ENCODE measurements at regions of chr6 and their contacts with region 1.

Region 1: DNA sequence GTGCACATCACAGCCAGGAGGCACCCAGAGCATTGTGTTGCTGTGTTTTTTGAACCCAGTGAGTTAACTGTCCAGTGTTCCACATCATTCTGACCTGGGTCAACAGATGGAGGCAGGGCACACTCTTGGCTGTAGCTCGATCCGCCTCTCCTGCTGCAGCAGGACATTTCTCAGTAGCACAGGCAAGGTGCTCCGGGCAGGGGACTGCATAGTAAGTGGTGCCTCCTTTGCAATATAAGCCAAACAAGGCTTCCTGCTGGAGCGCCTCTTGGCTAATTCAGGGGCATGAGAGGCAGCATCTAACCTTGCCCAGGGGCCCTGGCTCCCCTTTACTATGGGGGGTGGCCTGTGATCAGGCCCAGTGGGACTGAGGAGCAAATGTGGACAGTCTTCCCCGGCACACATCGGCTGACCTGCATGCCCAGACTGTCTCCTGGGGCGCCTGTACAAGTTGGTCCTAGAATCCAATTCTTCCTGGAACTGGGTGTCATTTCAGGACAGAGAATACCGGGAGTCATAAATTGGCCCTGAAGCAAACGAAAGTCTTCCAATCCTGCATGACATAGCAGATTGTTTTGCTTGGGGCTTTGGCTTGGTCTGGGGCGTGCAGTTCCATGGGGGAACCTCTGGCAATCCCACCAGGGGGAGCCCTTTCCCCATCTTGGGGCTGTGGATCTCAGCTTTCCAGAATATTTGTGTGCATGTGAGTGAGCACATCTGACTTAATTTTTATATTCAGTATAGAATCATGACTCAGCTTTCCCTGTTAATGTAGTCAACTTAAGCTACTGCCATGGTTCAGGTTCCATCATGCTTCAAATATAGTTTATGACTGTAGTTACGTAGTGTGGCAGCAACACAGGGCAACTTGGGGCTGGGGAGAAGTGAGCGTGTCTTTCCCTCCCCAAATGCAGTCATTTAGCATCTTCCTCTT is 56.0 kb upstream of the DDR1 start:
- DNase-seq: peak; percentile 85 to 95
- H3K4me3 ChIP-seq: no peak overlapping the region
- H3K27ac ChIP-seq: peak overlapping the region; percentile 82
- H3K4me1 ChIP-seq: peaks cover 34% of the 10 kb centered on the region
- H3K27me3 ChIP-seq: no peaks in the 10 kb centered on the region
- CTCF ChIP-seq: peak; percentile 93

Region 2: DNA sequence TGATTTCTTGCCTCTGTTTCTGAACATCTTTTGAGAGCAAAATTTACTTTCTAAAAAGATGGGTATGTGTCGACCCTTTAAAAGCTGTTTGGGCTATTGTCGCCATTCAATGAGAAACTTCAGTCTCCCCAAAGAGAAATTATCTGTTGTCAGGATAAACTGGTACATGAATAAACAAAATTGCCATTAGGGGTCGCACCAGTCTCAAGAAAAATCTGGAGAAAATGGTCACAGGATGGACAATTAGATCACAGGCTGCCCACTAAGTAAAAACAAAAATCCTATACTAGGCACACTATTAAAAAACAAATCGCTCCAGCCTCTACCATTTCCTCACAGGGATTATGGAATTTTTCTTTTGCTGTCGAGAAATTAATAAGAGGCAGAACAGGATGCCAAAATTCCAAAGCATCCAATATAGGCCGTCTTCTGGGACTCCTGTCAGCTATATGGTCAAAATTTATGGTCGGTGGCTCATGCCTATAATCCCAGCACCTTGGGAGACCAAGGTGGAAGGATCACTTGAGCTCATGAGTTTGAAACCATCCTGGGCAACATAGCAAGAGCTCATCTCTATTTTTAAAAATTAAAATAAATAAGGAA is 344.5 kb before region 1 on chr6:
- CTCF ChIA-PET with region 1: no interaction called
- POLR2A ChIA-PET with region 1: no interaction called
- intact Hi-C with region 1: loop called (anchors 5 kb)
- DNase-seq: peak; percentile 45 to 56
- H3K4me3 ChIP-seq: no peak overlapping the region
- H3K27ac ChIP-seq: no peak overlapping the region
- H3K4me1 ChIP-seq: no peaks in the 10 kb centered on the region; the same call in 1 of the 2 replicates
- H3K27me3 ChIP-seq: peaks cover 30% of the 10 kb centered on the region
- CTCF ChIP-seq: peak; percentile 74

Region 3: GRCh38 chr6:30742316-30743098 is 85.8 kb before region 1 on chr6 and contains the start of gene FLOT1:
- CTCF ChIA-PET with region 1: no interaction called
- POLR2A ChIA-PET with region 1: interaction called, 6 read pairs
- intact Hi-C with region 1: loop called (anchors 1 kb)
- DNase-seq: peak; percentile 94 to 100
- H3K4me3 ChIP-seq: peak within 1 kb of the TSS; percentile 86
- H3K27ac ChIP-seq: peak within 1 kb of the TSS; percentile 93
- H3K4me1 ChIP-seq: peaks cover 59% of the 10 kb centered on the region
- H3K27me3 ChIP-seq: no peaks in the 10 kb centered on the region
- CTCF ChIP-seq: no peak
- total RNA-seq, gene FLOT1: 225 and 234 TPM in 2 replicates

Region 4: GRCh38 chr6:30800871-30801270 is 27.4 kb before region 1 on chr6:
- CTCF ChIA-PET with region 1: no interaction called
- POLR2A ChIA-PET with region 1: no interaction called
- intact Hi-C with region 1: no loop called
- DNase-seq: no peak
- H3K4me3 ChIP-seq: no peak overlapping the region
- H3K27ac ChIP-seq: no peak overlapping the region
- H3K4me1 ChIP-seq: peaks cover 8% of the 10 kb centered on the region
- H3K27me3 ChIP-seq: no peaks in the 10 kb centered on the region
- CTCF ChIP-seq: no peak

Region 5: GRCh38 chr6:30877419-30878371 is 49.4 kb after region 1 on chr6:
- CTCF ChIA-PET with region 1: interaction called, 8 read pairs
- POLR2A ChIA-PET with region 1: interaction called, 8 read pairs
- intact Hi-C with region 1: loop called (anchors 1 kb)
- DNase-seq: peak; percentile 72 to 86
- H3K4me3 ChIP-seq: peak overlapping the region; percentile 49; the same call in 1 of the 2 replicates
- H3K27ac ChIP-seq: no peak overlapping the region
- H3K4me1 ChIP-seq: peaks cover 20% of the 10 kb centered on the region
- H3K27me3 ChIP-seq: no peaks in the 10 kb centered on the region
- CTCF ChIP-seq: peak; percentile 92

Region 6: DNA sequence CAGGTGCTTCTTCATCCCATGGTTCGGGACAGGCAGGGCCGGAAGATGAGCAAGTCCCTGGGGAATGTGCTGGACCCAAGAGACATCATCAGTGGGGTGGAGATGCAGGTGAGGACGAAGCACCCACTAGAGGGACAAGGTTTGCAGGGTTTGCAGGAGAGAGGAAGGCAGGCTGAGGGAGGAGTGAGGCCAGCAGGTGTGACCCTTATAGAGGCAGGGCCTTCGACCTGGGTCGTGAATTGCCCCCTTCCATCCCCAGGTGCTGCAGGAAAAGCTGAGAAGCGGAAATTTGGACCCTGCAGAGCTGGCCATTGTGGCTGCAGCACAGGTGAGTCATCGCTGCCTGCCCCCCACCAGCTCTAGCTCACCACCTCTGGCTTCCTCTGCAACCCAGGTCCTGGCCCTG is 94.2 kb after region 1 on chr6:
- CTCF ChIA-PET with region 1: no interaction called
- POLR2A ChIA-PET with region 1: no interaction called
- intact Hi-C with region 1: no loop called
- DNase-seq: peak in 1 of 2 experiments; percentile 66
- H3K4me3 ChIP-seq: no peak overlapping the region
- H3K27ac ChIP-seq: no peak overlapping the region
- H3K4me1 ChIP-seq: peaks cover 28% of the 10 kb centered on the region
- H3K27me3 ChIP-seq: no peaks in the 10 kb centered on the region
- CTCF ChIP-seq: no peak

Region 7: GRCh38 chr6:30942338-30943060 is 114.2 kb after region 1 on chr6:
- CTCF ChIA-PET with region 1: interaction called, 11 read pairs
- POLR2A ChIA-PET with region 1: no interaction called
- intact Hi-C with region 1: no loop called
- DNase-seq: peak; percentile 82 to 91
- H3K4me3 ChIP-seq: no peak overlapping the region
- H3K27ac ChIP-seq: no peak overlapping the region
- H3K4me1 ChIP-seq: peaks cover 8% of the 10 kb centered on the region; the same call in 1 of the 2 replicates
- H3K27me3 ChIP-seq: no peaks in the 10 kb centered on the region
- CTCF ChIP-seq: peak; percentile 80

Region 8: DNA sequence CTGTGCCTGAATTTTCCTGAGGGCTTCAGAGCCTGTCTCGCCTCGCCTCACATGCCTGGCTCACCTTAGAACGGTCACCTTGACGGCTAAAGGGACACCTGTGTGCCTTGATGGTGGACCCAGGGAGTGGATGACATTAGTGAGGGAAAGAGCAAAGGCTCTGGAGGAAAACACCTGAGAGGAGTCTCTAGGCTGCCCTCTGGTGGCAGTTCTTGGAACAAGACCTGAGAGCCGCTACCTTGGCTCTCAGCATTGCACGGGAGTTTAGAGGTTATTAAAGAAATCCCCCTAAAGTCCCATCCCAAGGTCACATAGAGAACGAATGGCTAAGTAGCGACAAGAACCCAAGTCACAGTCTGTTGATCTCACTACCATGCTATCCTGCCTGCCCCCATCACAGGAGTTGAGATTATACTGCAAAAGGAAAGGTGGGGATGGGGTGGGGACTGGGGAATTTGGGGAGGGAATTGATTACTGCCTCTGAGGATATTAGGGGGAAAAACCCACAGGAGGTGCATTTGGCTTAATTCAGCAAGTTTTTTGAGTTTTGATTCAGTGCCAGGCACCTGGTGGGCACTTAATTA is 299.9 kb after region 1 on chr6:
- CTCF ChIA-PET with region 1: interaction called, 3 read pairs
- POLR2A ChIA-PET with region 1: no interaction called
- intact Hi-C with region 1: loop called (anchors 2 kb)
- DNase-seq: peak; percentile 45 to 66
- H3K4me3 ChIP-seq: no peak overlapping the region
- H3K27ac ChIP-seq: no peak overlapping the region
- H3K4me1 ChIP-seq: peaks cover 15% of the 10 kb centered on the region
- H3K27me3 ChIP-seq: no peaks in the 10 kb centered on the region
- CTCF ChIP-seq: peak; percentile 85

Region 9: DNA sequence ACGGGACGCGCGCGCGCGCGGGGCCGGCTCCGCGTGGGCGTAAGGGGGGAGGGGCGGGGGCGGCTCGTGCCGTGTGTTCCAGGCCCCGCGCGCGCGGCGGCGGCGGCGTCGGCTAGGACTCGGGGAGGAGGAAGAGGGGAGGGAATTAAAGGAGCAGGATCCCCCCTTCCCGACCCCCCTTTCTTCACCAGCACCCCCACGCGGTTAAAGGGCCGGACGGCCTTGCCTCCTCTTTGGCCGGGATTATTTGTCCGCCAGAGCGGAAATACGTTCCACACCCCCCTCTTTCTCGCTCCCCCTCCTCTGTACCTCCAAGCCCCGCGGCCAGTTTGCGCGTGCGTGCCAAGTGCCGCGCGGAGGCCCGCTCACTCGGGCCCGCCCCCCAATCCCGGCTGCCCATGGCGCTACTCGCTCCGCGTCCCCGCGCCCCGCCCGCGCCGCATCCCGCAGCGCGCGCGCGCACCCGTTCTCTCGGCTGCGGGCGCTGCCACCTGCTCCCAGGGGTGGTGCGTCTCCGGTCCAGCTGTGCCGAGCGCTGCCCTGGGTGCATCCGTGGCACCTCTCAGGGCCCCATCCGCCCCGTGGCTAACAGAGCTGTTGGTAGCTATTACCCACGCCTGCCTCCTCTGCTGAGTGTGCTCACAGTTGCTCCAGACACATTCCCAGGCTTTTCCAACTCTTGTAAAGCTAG is 1073.8 kb after region 1 on chr6 and contains the start of gene ZBTB12:
- CTCF ChIA-PET with region 1: no interaction called
- POLR2A ChIA-PET with region 1: no interaction called
- intact Hi-C with region 1: no loop called
- DNase-seq: peak; percentile 76 to 95
- H3K4me3 ChIP-seq: peak within 1 kb of the TSS; percentile 65
- H3K27ac ChIP-seq: peak within 1 kb of the TSS; percentile 18; the same call in 1 of the 2 replicates
- H3K4me1 ChIP-seq: peaks cover 23% of the 10 kb centered on the region
- H3K27me3 ChIP-seq: no peaks in the 10 kb centered on the region
- CTCF ChIP-seq: no peak
- total RNA-seq, gene ZBTB12: 16.2 and 20.3 TPM in 2 replicates

Measured in PC-9 (cell line).